Naive thymus-derived CD4-positive, alpha-beta T cell (primary cell): ENCODE measurements at regions of chr5 and their contacts with region 1.

Region 1: GRCh38 chr5:54517174-54518092 is at the start of gene SNX18:
- DNase-seq: peak; percentile 87 to 94 (median 92)
- ATAC-seq: peak; percentile 98
- H3K4me3 ChIP-seq: peak within 1 kb of the TSS; percentile 62
- H3K4me3 Mint-ChIP-seq: peak within 1 kb of the TSS; percentile 62 to 94 (median 91)
- H3K27ac ChIP-seq: peak within 1 kb of the TSS; percentile 83
- H3K27ac Mint-ChIP-seq: peak within 1 kb of the TSS in 8 of 9 donors; percentile 52 to 87 (median 69)
- H3K4me1 ChIP-seq: peaks cover 18 to 37% of the 10 kb centered on the region in 2 donors
- H3K4me1 Mint-ChIP-seq: peaks cover 26 to 48% (median 41%) of the 10 kb centered on the region in 7 donors
- H3K27me3 ChIP-seq: no peaks in the 10 kb centered on the region
- H3K27me3 Mint-ChIP-seq: peaks cover 0 to 29% (median 0%) of the 10 kb centered on the region in 5 donors
- total RNA-seq, gene SNX18: 14.3 to 40.9 (median 28.1) TPM

Region 2: GRCh38 chr5:54443270-54443669 is 74.2 kb before region 1 on chr5:
- CTCF ChIA-PET with region 1: no interaction called
- POLR2A ChIA-PET with region 1: no interaction called
- intact Hi-C with region 1: no loop called
- DNase-seq: no peak
- ATAC-seq: no peak
- H3K4me3 ChIP-seq: no peak overlapping the region
- H3K4me3 Mint-ChIP-seq: no peak overlapping the region
- H3K27ac ChIP-seq: no peak overlapping the region
- H3K27ac Mint-ChIP-seq: peak overlapping the region in 1 of 9 donors; percentile 22
- H3K4me1 ChIP-seq: peaks cover 0 to 18% of the 10 kb centered on the region in 2 donors
- H3K4me1 Mint-ChIP-seq: peaks cover 9 to 39% (median 36%) of the 10 kb centered on the region in 7 donors
- H3K27me3 ChIP-seq: no peaks in the 10 kb centered on the region
- H3K27me3 Mint-ChIP-seq: peaks cover 0 to 3% (median 0%) of the 10 kb centered on the region in 5 donors

Region 3: DNA sequence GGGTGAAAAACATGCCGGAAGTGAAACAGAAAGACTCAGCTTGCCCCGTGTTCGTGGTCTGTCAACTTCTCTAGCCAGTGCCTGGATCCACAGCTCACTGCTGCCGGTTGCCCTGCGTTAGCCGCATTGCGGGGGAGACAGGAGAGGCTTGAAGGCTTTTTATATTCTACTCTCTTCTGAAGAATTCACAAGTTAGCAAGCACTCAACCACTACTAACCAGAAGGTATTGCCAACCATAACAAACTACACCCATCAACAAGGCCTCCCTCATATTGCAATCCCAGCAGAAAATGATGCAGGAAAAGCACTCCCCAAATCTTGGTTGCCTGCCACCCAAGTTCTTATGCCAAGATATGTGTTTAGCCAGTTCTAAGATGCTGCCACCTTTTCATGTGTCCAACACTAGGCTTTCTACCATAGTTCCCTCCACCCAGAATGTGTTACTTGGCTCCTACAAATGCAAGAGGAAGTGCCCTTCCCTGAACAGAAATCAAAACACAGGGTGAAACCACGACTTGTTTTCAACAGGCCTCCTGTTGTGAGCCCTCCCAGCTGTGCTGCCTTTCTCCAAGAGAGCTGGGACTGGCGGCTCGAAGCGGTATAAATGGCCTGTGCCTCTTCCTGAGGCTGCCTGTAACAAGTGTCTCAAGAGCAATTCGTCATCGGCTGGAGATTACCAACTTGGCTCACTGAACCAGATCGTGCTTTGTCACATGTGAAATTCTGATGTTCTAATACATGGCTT is 129.1 kb after region 1 on chr5:
- CTCF ChIA-PET with region 1: interaction called, 8 read pairs
- POLR2A ChIA-PET with region 1: interaction called, 32 read pairs
- intact Hi-C with region 1: loop called (anchors 1 kb)
- DNase-seq: peak; percentile 18 to 81 (median 70)
- ATAC-seq: peak; percentile 88
- H3K4me3 ChIP-seq: peak overlapping the region; percentile 44
- H3K4me3 Mint-ChIP-seq: peak overlapping the region; percentile 63 to 85 (median 80)
- H3K27ac ChIP-seq: peak overlapping the region; percentile 64
- H3K27ac Mint-ChIP-seq: peak overlapping the region; percentile 94 to 99 (median 97)
- H3K4me1 ChIP-seq: peaks cover 44 to 48% of the 10 kb centered on the region in 2 donors
- H3K4me1 Mint-ChIP-seq: peaks cover 41 to 72% (median 60%) of the 10 kb centered on the region in 7 donors
- H3K27me3 ChIP-seq: no peaks in the 10 kb centered on the region
- H3K27me3 Mint-ChIP-seq: no peaks in the 10 kb centered on the region

Region 4: GRCh38 chr5:54792611-54793404 is 275.4 kb after region 1 on chr5:
- CTCF ChIA-PET with region 1: interaction called, 4 read pairs
- POLR2A ChIA-PET with region 1: no interaction called
- intact Hi-C with region 1: loop called in 1 of 2 experiments (anchors 1 kb)
- DNase-seq: no peak
- ATAC-seq: no peak
- H3K4me3 ChIP-seq: no peak overlapping the region
- H3K4me3 Mint-ChIP-seq: peak overlapping the region in 1 of 10 donors; percentile 11
- H3K27ac ChIP-seq: no peak overlapping the region
- H3K27ac Mint-ChIP-seq: peak overlapping the region in 1 of 9 donors; percentile 65
- H3K4me1 ChIP-seq: no peaks in the 10 kb centered on the region
- H3K4me1 Mint-ChIP-seq: peaks cover 4 to 40% (median 16%) of the 10 kb centered on the region in 7 donors
- H3K27me3 ChIP-seq: no peaks in the 10 kb centered on the region
- H3K27me3 Mint-ChIP-seq: peaks cover 0 to 19% (median 4%) of the 10 kb centered on the region in 5 donors

Region 5: DNA sequence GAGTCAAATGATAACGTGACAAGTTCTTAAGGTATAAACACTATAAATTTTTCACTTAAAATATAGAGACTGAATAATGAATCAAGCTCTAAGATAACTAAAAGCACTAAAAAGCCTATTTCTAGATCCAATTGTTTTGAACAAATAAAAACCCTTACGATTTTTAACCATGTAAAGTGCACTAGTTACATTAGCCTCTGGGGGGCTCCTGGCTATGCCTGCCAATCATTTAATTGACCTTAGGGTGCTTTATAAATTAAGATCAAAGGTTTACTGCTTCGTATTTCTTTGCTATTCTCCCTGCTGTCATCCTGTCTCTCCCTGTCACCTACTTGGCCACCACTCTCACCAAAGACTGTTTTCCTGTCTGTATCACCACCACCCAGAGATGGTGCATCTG is 334.6 kb after region 1 on chr5:
- CTCF ChIA-PET with region 1: interaction called, 32 read pairs
- POLR2A ChIA-PET with region 1: interaction called, 3 read pairs
- intact Hi-C with region 1: no loop called
- DNase-seq: no peak
- ATAC-seq: no peak
- H3K4me3 ChIP-seq: no peak overlapping the region
- H3K4me3 Mint-ChIP-seq: no peak overlapping the region
- H3K27ac ChIP-seq: no peak overlapping the region
- H3K27ac Mint-ChIP-seq: no peak overlapping the region
- H3K4me1 ChIP-seq: no peaks in the 10 kb centered on the region
- H3K4me1 Mint-ChIP-seq: no peaks in the 10 kb centered on the region
- H3K27me3 ChIP-seq: no peaks in the 10 kb centered on the region
- H3K27me3 Mint-ChIP-seq: peaks cover 13 to 51% (median 19%) of the 10 kb centered on the region in 5 donors

Region 6: GRCh38 chr5:54905943-54906537 is 388.6 kb after region 1 on chr5:
- CTCF ChIA-PET with region 1: no interaction called
- POLR2A ChIA-PET with region 1: no interaction called
- intact Hi-C with region 1: loop called in 1 of 2 experiments (anchors 1 kb)
- DNase-seq: peak; percentile 26 to 65 (median 53)
- ATAC-seq: peak; percentile 55
- H3K4me3 ChIP-seq: no peak overlapping the region
- H3K4me3 Mint-ChIP-seq: no peak overlapping the region
- H3K27ac ChIP-seq: no peak overlapping the region
- H3K27ac Mint-ChIP-seq: no peak overlapping the region
- H3K4me1 ChIP-seq: peaks cover 0 to 10% of the 10 kb centered on the region in 2 donors
- H3K4me1 Mint-ChIP-seq: peaks cover 6 to 64% (median 10%) of the 10 kb centered on the region in 7 donors
- H3K27me3 ChIP-seq: no peaks in the 10 kb centered on the region
- H3K27me3 Mint-ChIP-seq: peaks cover 0 to 51% (median 6%) of the 10 kb centered on the region in 5 donors

Region 7: GRCh38 chr5:55172051-55172899 is 654.8 kb after region 1 on chr5:
- CTCF ChIA-PET with region 1: no interaction called
- POLR2A ChIA-PET with region 1: no interaction called
- intact Hi-C with region 1: loop called (anchors 2 to 5 kb)
- DNase-seq: peak in 8 of 9 donors; percentile 53 to 81 (median 75)
- ATAC-seq: peak; percentile 80
- H3K4me3 ChIP-seq: peak overlapping the region; percentile 42
- H3K4me3 Mint-ChIP-seq: peak overlapping the region; percentile 78 to 93 (median 86)
- H3K27ac ChIP-seq: no peak overlapping the region
- H3K27ac Mint-ChIP-seq: peak overlapping the region in 4 of 9 donors; percentile 4 to 83 (median 57)
- H3K4me1 ChIP-seq: peaks cover 14 to 25% of the 10 kb centered on the region in 2 donors
- H3K4me1 Mint-ChIP-seq: peaks cover 23 to 45% (median 35%) of the 10 kb centered on the region in 7 donors
- H3K27me3 ChIP-seq: peaks cover 25 to 42% of the 10 kb centered on the region in 2 donors
- H3K27me3 Mint-ChIP-seq: peaks cover 73 to 88% (median 78%) of the 10 kb centered on the region in 5 donors